WTC11 (cell line): ENCODE measurements at regions of chr18 and their contacts with region 1.

Region 1: DNA sequence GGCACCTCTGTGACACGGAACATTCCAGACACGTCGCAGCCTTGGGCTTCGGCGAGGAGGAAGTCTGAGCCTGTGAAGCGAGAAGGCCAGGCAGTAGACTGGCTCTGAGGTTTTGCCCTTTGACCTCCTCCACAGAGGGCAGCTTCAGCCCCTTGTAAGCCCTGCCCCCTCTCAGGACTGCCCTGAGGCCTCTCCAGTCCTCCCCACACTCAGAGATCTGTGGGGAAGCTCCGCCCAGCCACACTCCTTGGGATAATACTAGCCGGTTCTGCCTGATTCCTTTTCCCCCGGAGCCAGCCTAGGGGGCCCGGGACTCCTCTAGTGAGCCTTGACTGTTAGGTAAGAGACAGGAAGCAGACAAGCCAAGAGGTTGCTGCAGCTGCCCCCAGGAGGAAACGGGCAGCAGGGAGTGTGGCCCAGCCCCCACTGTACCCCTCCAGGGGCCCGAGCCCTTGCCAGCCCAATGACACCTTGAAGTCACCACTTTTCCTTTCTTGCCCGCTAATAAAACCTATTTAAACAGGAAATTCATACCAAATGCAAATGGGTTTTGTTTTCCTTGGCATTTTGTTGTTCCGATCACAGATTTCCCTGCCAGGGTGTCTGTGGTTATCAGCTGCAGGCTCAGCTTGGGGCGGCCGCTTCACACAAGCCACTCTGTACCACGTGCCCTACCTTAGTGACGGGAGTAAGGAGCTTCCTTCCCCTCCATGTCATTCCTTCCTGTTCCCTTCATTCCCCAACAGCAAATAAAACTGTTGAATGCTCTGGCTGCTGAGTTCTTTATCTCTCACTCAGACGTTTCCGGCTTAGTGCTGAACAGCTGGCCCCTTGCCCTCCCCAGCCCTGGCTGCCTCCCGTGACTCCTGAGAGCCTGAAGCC is 124.7 kb downstream of the CABLES1 start:
- DNase-seq: peak; percentile 74
- ATAC-seq: peak; percentile 88
- H3K4me3 Mint-ChIP-seq: peak overlapping the region; percentile 31; the same call in 1 of the 2 replicates
- H3K27ac Mint-ChIP-seq: peak overlapping the region; percentile 97
- H3K4me1 Mint-ChIP-seq: peaks cover 51% of the 10 kb centered on the region
- H3K27me3 Mint-ChIP-seq: 0 out of 2 replicates have a peak, but pooled peaks cover 2% of the 10 kb centered on the region
- CTCF ChIP-seq: no peak

Region 2: GRCh38 chr18:22765896-22766295 is 494.0 kb before region 1 on chr18:
- CTCF ChIA-PET with region 1: no interaction called
- POLR2A ChIA-PET with region 1: no interaction called
- DNase-seq: no peak
- ATAC-seq: no peak
- H3K4me3 Mint-ChIP-seq: no peak overlapping the region
- H3K27ac Mint-ChIP-seq: no peak overlapping the region
- H3K4me1 Mint-ChIP-seq: no peaks in the 10 kb centered on the region
- H3K27me3 Mint-ChIP-seq: peaks cover 7% of the 10 kb centered on the region
- CTCF ChIP-seq: no peak

Region 3: DNA sequence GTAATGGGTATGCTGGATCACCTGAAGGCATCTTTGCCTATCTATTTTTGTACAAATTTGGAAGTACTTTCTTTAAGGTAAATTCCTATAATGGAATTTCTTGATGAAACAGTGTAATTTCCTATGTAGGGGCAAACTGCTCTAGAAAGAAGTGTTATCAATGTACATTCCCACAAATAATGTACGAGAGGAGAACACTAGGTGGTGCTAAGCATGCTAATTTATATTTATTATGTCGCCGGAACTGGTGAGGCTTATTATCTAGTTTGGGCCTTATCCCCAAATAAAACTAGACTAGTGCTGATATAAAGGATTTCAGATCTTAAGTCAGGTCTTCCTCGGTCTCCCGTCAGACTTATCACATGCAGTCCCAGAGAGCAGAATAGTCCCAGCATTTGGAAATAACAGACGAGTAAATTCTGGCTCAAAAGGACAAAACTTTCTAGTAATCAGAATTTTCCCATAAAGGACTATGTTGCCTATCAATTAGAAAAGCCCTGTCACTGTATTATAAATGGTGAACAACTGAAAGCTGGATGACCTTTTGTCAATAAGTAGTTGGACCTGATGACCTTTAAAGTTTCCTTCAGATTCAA is 413.8 kb before region 1 on chr18:
- CTCF ChIA-PET with region 1: no interaction called
- POLR2A ChIA-PET with region 1: interaction called, 10 read pairs
- DNase-seq: no peak
- ATAC-seq: no peak
- H3K4me3 Mint-ChIP-seq: no peak overlapping the region
- H3K27ac Mint-ChIP-seq: no peak overlapping the region
- H3K4me1 Mint-ChIP-seq: peaks cover 28% of the 10 kb centered on the region
- H3K27me3 Mint-ChIP-seq: no peaks in the 10 kb centered on the region
- CTCF ChIP-seq: no peak

Region 4: GRCh38 chr18:23143016-23143814 is 116.7 kb before region 1 on chr18:
- CTCF ChIA-PET with region 1: no interaction called
- POLR2A ChIA-PET with region 1: no interaction called
- DNase-seq: no peak
- ATAC-seq: no peak; the same call in 1 of the 2 replicates
- H3K4me3 Mint-ChIP-seq: no peak overlapping the region
- H3K27ac Mint-ChIP-seq: peak overlapping the region; percentile 67
- H3K4me1 Mint-ChIP-seq: peaks cover 79% of the 10 kb centered on the region
- H3K27me3 Mint-ChIP-seq: no peaks in the 10 kb centered on the region
- CTCF ChIP-seq: no peak

Region 5: GRCh38 chr18:23226930-23227725 is 32.8 kb before region 1 on chr18:
- CTCF ChIA-PET with region 1: no interaction called
- POLR2A ChIA-PET with region 1: no interaction called
- DNase-seq: no peak
- ATAC-seq: no peak
- H3K4me3 Mint-ChIP-seq: no peak overlapping the region
- H3K27ac Mint-ChIP-seq: no peak overlapping the region; the same call in 1 of the 2 replicates
- H3K4me1 Mint-ChIP-seq: peaks cover 16% of the 10 kb centered on the region
- H3K27me3 Mint-ChIP-seq: no peaks in the 10 kb centered on the region
- CTCF ChIP-seq: no peak

Region 6: GRCh38 chr18:23243178-23243577 is 16.8 kb before region 1 on chr18:
- CTCF ChIA-PET with region 1: interaction called, 13 read pairs
- POLR2A ChIA-PET with region 1: interaction called, 4 read pairs
- DNase-seq: peak; percentile 41
- ATAC-seq: peak; percentile 81
- H3K4me3 Mint-ChIP-seq: no peak overlapping the region
- H3K27ac Mint-ChIP-seq: no peak overlapping the region
- H3K4me1 Mint-ChIP-seq: peaks cover 49% of the 10 kb centered on the region
- H3K27me3 Mint-ChIP-seq: no peaks in the 10 kb centered on the region; the same call in 1 of the 2 replicates
- CTCF ChIP-seq: no peak

Region 7: DNA sequence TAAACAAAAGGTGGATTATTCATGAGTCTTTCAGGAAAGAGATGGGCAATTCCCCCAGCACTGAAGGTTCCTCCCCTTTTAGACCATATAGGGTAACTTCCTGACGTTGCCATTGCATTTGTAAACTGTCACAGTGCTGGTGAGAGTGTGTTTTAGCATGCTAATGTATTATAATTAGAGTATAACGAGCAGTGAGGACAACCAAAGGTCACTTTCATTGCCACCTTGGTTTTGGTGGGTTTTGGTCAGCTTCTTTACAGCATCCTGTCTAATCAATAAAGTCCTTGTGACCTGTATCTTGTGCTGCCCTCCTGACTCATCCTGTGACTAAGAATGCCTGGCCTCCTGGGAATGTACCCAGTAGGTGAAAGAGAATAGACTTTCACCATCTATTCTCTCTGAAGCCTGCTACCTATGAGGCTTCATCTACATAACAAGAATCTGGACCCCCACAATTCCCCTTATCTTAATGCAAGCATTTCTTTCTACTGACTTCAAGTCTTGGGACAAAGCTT is 24.0 kb after region 1 on chr18:
- CTCF ChIA-PET with region 1: no interaction called
- POLR2A ChIA-PET with region 1: interaction called, 12 read pairs
- DNase-seq: peak; percentile 36
- ATAC-seq: peak; percentile 96
- H3K4me3 Mint-ChIP-seq: no peak overlapping the region
- H3K27ac Mint-ChIP-seq: peak overlapping the region; percentile 98
- H3K4me1 Mint-ChIP-seq: peaks cover 74% of the 10 kb centered on the region
- H3K27me3 Mint-ChIP-seq: no peaks in the 10 kb centered on the region
- CTCF ChIP-seq: no peak

Region 8: GRCh38 chr18:23377669-23378301 is 117.8 kb after region 1 on chr18:
- CTCF ChIA-PET with region 1: interaction called, 12 read pairs
- POLR2A ChIA-PET with region 1: no interaction called
- DNase-seq: no peak
- ATAC-seq: no peak
- H3K4me3 Mint-ChIP-seq: no peak overlapping the region
- H3K27ac Mint-ChIP-seq: no peak overlapping the region
- H3K4me1 Mint-ChIP-seq: peaks cover 10% of the 10 kb centered on the region
- H3K27me3 Mint-ChIP-seq: no peaks in the 10 kb centered on the region
- CTCF ChIP-seq: no peak